ENCODE measurements at regions of chr2 and their contacts with region 1.

Region 1: GRCh38 chr2:201628545-201628944 is 14.8 kb downstream of the TMEM237 start:
- DNase-seq: no peak
- ATAC-seq: no peak
- H3K4me3 ChIP-seq: no peak overlapping the region
- H3K27ac ChIP-seq: no peak overlapping the region
- H3K4me1 ChIP-seq: no peaks in the 10 kb centered on the region
- H3K27me3 ChIP-seq: no peaks in the 10 kb centered on the region
- CTCF ChIP-seq: no peak

Region 2: GRCh38 chr2:201378496-201379397 is 249.8 kb before region 1 on chr2:
- intact Hi-C with region 1: loop called in 1 of 2 experiments (anchors 10 kb)
- DNase-seq: no peak
- ATAC-seq: no peak
- H3K4me3 ChIP-seq: no peak overlapping the region
- H3K27ac ChIP-seq: no peak overlapping the region
- H3K4me1 ChIP-seq: no peaks in the 10 kb centered on the region
- H3K27me3 ChIP-seq: no peaks in the 10 kb centered on the region
- CTCF ChIP-seq: no peak

Region 3: GRCh38 chr2:201798252-201798913 is 169.8 kb after region 1 on chr2:
- intact Hi-C with region 1: no loop called
- DNase-seq: no peak
- ATAC-seq: no peak
- H3K4me3 ChIP-seq: no peak overlapping the region
- H3K27ac ChIP-seq: no peak overlapping the region
- H3K4me1 ChIP-seq: no peaks in the 10 kb centered on the region
- H3K27me3 ChIP-seq: no peaks in the 10 kb centered on the region
- CTCF ChIP-seq: no peak